Heart right ventricle (tissue), 16 donors: ENCODE measurements at regions of chr21 and their contacts with region 1.

Region 1: GRCh38 chr21:37273911-37274690 is 7.0 kb upstream of the VPS26C start:
- DNase-seq: no peak
- ATAC-seq: no peak
- H3K4me3 ChIP-seq: no peak overlapping the region
- H3K27ac ChIP-seq: no peak overlapping the region
- H3K4me1 ChIP-seq: peaks cover 0 to 3% (median 0%) of the 10 kb centered on the region in 9 donors
- H3K27me3 ChIP-seq: no peaks in the 10 kb centered on the region
- CTCF ChIP-seq: no peak

Region 2: DNA sequence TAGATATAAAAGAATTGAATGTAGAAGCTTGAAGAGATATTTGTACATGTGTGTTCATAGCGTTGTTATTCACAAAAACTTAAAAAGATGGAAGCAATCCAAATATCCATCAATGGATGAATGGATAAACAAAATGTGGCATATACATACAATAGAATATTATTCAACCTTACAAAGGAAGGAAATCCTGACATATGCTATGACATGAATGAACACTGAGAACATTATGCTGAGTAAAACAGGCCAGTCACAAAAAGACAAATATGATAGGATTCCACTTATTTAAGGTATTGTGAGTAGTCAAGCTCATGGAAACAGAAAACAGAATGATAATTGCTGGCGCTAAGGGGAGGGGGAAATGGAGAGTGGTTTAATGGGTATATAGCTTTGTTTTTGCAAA is 45.5 kb after region 1 on chr21:
- intact Hi-C with region 1: loop called in 1 of 10 experiments (anchors 5 kb)
- DNase-seq: no peak
- ATAC-seq: no peak
- H3K4me3 ChIP-seq: no peak overlapping the region
- H3K27ac ChIP-seq: no peak overlapping the region
- H3K4me1 ChIP-seq: no peaks in the 10 kb centered on the region
- H3K27me3 ChIP-seq: no peaks in the 10 kb centered on the region
- CTCF ChIP-seq: no peak

Region 3: DNA sequence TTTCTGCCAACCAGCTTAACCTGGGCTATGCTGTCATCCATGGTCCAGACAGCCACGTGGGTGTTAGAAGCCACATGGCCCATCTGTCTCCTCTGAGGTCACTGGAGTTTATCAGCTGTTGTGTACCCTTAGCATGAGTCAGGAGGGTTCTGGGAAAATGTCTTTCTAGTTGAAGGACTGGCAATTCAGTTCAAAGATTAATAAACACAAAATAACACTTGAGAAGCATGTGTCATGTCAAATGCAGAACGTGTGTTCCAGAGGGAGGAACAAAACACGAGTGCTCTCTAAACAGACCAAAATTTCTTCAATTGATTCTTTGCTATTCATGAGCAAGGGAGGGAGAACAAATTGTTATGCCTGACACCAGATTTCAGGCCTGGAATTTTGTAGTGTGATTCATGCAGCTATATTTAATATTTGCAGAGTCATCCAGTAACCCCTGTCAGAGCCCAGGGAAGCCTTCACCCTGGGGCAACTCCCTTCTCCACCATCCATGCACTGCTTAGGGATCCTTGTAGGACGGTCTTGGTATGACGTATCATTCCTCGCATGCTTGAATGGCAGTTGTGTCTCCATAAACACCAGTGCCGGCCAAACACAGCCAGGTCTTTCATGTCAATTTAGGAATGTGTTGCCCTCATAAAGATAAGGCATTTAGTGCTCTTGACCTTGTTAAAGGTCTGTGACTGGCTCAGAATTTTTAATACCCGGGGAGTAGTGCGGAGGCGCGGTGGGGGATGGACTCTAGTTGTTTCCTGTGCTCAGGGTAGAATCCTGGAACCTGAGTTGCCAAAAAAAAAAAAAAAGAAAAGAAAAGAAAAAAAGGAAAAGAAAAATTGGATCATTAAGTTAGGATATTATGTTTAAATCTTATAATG is 64.8 kb after region 1 on chr21:
- intact Hi-C with region 1: loop called in 5 of 10 experiments (anchors 5 to 10 kb)
- DNase-seq: peak; percentile 37 to 69
- ATAC-seq: peak; percentile 88 to 98 (median 96)
- H3K4me3 ChIP-seq: peak overlapping the region in 1 of 10 donors; percentile 2
- H3K27ac ChIP-seq: peak overlapping the region; percentile 74 to 88 (median 81)
- H3K4me1 ChIP-seq: peaks cover 0 to 29% (median 16%) of the 10 kb centered on the region in 9 donors
- H3K27me3 ChIP-seq: no peaks in the 10 kb centered on the region
- CTCF ChIP-seq: no peak